Activated T-helper 1 cell treated with anti-CD3 and anti-CD28 coated beads, Interleukin-12 subunit alpha, Interleukin-12 subunit beta, Interleukin-2, Interleukin-4 antibody, amounts not matched to agents 30 ng/mL and 10 ng/mL and 1 ng/mL, durations not matched to agents 14 hours and 24 hours and 36 hours (primary cell): ENCODE measurements at regions of chr11 and their contacts with region 1.

Region 1: GRCh38 chr11:8018484-8019313 is 31.6 kb downstream of the EIF3F start:
- DNase-seq: peak; percentile 53
- H3K4me3 Mint-ChIP-seq: peak overlapping the region; percentile 77
- H3K27ac Mint-ChIP-seq: peak overlapping the region; percentile 82
- H3K4me1 Mint-ChIP-seq: peaks cover 13% of the 10 kb centered on the region
- H3K27me3 Mint-ChIP-seq: peaks cover 35% of the 10 kb centered on the region

Region 2: DNA sequence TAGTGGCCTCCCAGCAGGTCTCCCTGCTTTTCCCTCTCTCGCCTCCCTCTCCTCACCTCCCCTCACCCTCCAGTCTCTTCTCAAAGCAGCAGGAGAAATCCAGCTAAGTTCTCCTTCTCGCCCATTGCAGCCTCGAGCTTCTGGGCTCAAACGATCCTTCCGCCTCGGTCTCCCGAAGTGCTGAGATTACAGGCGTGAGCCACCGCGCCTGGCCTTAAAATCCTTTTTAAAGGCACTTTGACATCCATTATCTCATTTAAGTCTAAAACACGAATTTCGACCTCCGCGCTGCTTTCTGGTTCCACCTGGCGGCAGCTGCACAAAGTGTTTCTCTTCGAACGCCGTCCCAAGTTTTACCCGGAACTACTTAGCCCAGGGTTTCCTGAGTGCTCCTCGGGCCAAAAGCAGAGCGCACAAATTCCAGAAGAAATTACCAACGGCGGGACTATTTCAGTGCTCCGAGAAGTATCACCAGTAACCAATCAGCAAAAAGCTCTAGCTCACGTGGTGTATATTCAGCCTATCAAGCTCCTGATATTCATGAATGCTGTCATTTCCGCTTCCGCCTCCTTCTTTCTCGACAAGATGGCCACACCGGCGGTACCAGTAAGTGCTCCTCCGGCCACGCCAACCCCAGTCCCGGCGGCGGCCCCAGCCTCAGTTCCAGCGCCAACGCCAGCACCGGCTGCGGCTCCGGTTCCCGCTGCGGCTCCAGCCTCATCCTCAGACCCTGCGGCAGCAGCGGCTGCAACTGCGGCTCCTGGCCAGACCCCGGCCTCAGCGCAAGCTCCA is 31.7 kb before region 1 on chr11 and contains the start of gene EIF3F:
- intact Hi-C with region 1: loop called (anchors 1 kb)
- DNase-seq: peak; percentile 91
- H3K4me3 Mint-ChIP-seq: peak within 1 kb of the TSS; percentile 99
- H3K27ac Mint-ChIP-seq: peak within 1 kb of the TSS; percentile 93
- H3K4me1 Mint-ChIP-seq: peaks cover 39% of the 10 kb centered on the region
- H3K27me3 Mint-ChIP-seq: peaks cover 2% of the 10 kb centered on the region
- total RNA-seq, gene EIF3F: 210 and 214 TPM in 2 replicates

Region 3: DNA sequence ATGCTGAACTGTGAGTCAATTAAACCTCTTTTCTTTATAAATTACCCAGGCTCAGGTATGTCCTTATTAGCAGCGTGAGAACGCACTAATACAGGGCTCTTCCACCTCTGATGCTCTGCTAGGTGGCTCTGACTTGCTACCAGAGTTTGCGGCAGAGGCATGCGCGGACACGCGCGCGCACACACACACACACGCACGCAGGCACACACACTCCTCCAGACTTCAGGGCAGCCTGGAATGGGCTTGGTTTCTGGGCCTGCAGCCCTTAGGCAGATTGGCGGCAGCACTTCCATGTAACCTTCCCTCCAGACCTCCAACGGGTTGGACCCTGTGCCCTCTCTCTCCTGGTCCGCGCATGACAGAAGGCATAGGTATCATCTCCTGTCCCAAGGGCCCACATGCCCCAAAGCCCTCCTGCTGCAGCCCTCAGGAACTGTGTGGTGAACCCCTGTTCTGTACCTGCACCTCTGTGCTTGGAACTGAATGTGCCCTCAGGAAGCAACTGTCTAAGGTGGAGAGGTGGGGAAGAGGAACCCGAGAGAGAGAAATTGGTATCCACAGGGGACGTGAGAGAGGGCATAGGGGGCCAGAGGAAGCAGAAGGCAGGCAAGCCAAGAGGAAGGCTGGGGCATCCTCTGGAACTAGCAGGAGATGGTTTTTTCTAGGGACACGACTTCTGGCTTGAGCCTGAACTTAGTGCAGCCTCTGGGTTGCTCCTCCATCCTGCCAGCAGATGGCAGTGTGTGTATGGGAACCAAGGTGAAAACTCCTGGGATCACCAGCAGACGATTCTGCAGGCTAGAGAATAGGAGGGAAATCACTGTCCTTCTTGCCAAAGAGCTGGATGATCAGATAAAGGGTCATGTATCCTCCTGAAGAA is 173.6 kb after region 1 on chr11:
- intact Hi-C with region 1: no loop called
- DNase-seq: no peak
- H3K4me3 Mint-ChIP-seq: no peak overlapping the region
- H3K27ac Mint-ChIP-seq: no peak overlapping the region
- H3K4me1 Mint-ChIP-seq: no peaks in the 10 kb centered on the region
- H3K27me3 Mint-ChIP-seq: peaks cover 8% of the 10 kb centered on the region